ENCODE measurements at regions of chrX and their contacts with region 1.

Region 1: DNA sequence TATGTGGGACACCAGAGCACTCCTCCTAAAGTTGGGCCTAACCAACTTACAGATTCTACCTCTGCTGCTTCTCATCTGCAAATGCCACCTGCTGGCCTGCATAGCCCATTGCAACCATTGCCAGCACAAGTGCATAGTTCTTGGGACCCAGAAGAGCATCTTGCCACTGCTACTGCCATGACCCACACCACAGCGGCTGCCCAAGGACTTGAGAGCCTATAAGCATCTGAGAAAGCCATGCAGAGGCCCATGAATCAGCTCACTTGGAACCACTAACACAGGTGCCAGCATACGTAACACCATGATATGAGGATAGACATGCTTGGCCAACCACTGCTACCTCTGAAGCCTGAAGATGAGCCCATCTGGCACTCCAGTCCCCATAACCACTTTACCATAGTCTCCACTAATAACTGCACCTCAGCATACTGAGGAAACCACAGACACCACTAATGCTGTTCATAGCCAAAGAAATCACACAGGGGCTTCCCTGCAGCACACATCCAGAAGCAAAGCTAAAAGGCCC is 258.1 kb upstream of the AGTR2 start:
- DNase-seq: no peak
- H3K4me3 ChIP-seq: no peak overlapping the region
- H3K27ac ChIP-seq: no peak overlapping the region
- H3K4me1 ChIP-seq: no peaks in the 10 kb centered on the region
- H3K27me3 ChIP-seq: no peaks in the 10 kb centered on the region
- CTCF ChIP-seq: no peak
- EP300 ChIP-seq: no peak
- POLR2A ChIP-seq: no peak

Region 2: GRCh38 chrX:117138070-117138469 is 1225.6 kb after region 1 on chrX:
- intact Hi-C with region 1: loop called in 1 of 4 experiments (anchors 5 kb)
- DNase-seq: no peak
- H3K4me3 ChIP-seq: no peak overlapping the region
- H3K27ac ChIP-seq: no peak overlapping the region
- H3K4me1 ChIP-seq: no peaks in the 10 kb centered on the region
- H3K27me3 ChIP-seq: no peaks in the 10 kb centered on the region
- CTCF ChIP-seq: no peak
- EP300 ChIP-seq: no peak
- POLR2A ChIP-seq: no peak

Measured in ovary (tissue), 10 donors.